Mammary epithelial cell (primary cell): ENCODE measurements at regions of chr15 and their contacts with region 1.

Region 1: GRCh38 chr15:100349696-100350433 is 8.1 kb upstream of the ADAMTS17 start:
- DNase-seq: peak; percentile 78
- H3K4me3 ChIP-seq: peak overlapping the region; percentile 46 to 52 (median 48)
- H3K27ac ChIP-seq: peak overlapping the region; percentile 30
- H3K4me1 ChIP-seq: peaks cover 15% of the 10 kb centered on the region
- H3K27me3 ChIP-seq: no peaks in the 10 kb centered on the region
- CTCF ChIP-seq: peak; percentile 82 to 92

Region 2: GRCh38 chr15:99928429-99928981 is 421.4 kb before region 1 on chr15:
- CTCF ChIA-PET with region 1: interaction called, 3 read pairs
- dilution Hi-C with region 1: loop called (anchors 25 kb)
- in situ Hi-C with region 1: no loop called
- intact Hi-C with region 1: no loop called
- DNase-seq: peak; percentile 65
- H3K4me3 ChIP-seq: peak overlapping the region; percentile 30 to 69 (median 60)
- H3K27ac ChIP-seq: no peak overlapping the region
- H3K4me1 ChIP-seq: peaks cover 14% of the 10 kb centered on the region
- H3K27me3 ChIP-seq: no peaks in the 10 kb centered on the region
- CTCF ChIP-seq: peak; percentile 24 to 66

Region 3: GRCh38 chr15:100565591-100565990 is 215.7 kb after region 1 on chr15:
- CTCF ChIA-PET with region 1: no interaction called
- dilution Hi-C with region 1: no loop called
- in situ Hi-C with region 1: loop called (anchors 10 to 25 kb)
- intact Hi-C with region 1: no loop called
- DNase-seq: peak; percentile 64
- H3K4me3 ChIP-seq: no peak overlapping the region
- H3K27ac ChIP-seq: no peak overlapping the region
- H3K4me1 ChIP-seq: peaks cover 4% of the 10 kb centered on the region
- H3K27me3 ChIP-seq: no peaks in the 10 kb centered on the region
- CTCF ChIP-seq: no peak

Region 4: GRCh38 chr15:100602064-100602822 is 252.4 kb after region 1 on chr15 and contains the starts of genes ASB7 and LINS1:
- CTCF ChIA-PET with region 1: no interaction called
- dilution Hi-C with region 1: no loop called
- in situ Hi-C with region 1: no loop called
- intact Hi-C with region 1: loop called (anchors 1 kb)
- DNase-seq: peak; percentile 100
- H3K4me3 ChIP-seq: peak within 1 kb of the TSS; percentile 85 to 98 (median 97)
- H3K27ac ChIP-seq: peak within 1 kb of the TSS; percentile 93
- H3K4me1 ChIP-seq: peaks cover 14% of the 10 kb centered on the region
- H3K27me3 ChIP-seq: no peaks in the 10 kb centered on the region
- CTCF ChIP-seq: no peak
- total RNA-seq, gene ASB7: 15.4 to 20.7 TPM
- total RNA-seq, gene LINS1: 19.0 to 26.3 TPM

Region 5: GRCh38 chr15:101251830-101252820 is 902.3 kb after region 1 on chr15 and contains the start of gene CHSY1:
- CTCF ChIA-PET with region 1: no interaction called
- dilution Hi-C with region 1: no loop called
- in situ Hi-C with region 1: no loop called
- intact Hi-C with region 1: loop called (anchors 10 kb)
- DNase-seq: peak; percentile 91
- H3K4me3 ChIP-seq: peak within 1 kb of the TSS; percentile 70 to 90 (median 76)
- H3K27ac ChIP-seq: peak within 1 kb of the TSS; percentile 67
- H3K4me1 ChIP-seq: peaks cover 24% of the 10 kb centered on the region
- H3K27me3 ChIP-seq: no peaks in the 10 kb centered on the region
- CTCF ChIP-seq: peak in 1 of 2 donors; percentile 30
- total RNA-seq, gene CHSY1: 37.9 to 40.2 TPM